ENCODE measurements at regions of chr9 and their contacts with region 1.

Region 1: DNA sequence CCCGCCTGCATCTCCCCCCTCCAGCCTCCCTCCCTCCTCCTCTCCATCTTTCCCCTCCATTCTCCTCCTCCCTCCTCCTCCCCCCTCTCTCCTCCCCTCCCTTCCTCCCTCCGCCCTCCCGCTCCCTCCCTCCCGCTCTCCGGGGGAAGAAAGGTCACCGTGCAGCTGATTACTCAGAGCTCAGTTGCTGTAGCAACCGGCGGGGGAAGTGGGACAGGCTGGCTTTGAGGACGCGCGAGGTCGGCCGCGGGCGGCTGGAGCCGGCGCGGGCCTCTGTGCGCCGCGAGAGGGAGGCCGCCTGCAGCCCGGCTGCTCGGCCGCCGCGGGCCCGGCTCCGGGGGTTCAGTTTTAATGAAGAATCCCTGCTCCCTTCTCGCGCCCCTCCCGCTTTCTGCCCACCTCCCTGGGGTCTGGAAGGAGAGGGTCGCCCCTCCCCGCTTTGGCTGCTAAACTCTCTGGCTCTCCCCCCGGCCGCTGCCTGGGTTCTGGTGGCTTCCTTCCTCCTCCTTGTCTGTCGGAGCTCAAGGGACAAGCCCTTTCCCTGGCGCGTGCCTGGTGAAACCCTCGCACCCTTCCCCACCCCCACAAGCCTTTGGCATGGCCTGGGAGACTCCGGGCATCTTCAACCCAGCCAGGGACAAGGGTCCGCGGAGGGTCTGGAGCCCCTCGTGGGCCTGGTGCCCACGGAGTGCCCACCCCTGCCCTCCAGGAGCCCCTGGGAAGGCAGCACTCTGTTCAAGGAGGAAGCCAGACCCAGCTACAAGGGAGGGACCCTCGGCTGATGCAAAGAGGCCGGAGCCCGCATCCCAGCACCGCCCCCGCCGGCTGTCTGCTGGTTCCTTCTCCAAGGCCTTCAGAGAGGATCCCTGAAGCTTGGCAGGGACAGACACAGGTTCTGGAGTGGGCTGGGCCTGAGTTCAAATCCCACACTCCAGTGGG is 160.3 kb downstream of the C9orf50 start:
- DNase-seq: peak; percentile 71 to 96 (median 86)
- ATAC-seq: peak; percentile 74
- H3K4me3 ChIP-seq: peak overlapping the region; percentile 55
- H3K4me3 Mint-ChIP-seq: peak overlapping the region; percentile 73
- H3K27ac ChIP-seq: peak overlapping the region; percentile 59 to 87
- H3K27ac Mint-ChIP-seq: peak overlapping the region; percentile 89
- H3K4me1 ChIP-seq: peaks cover 60% of the 10 kb centered on the region
- H3K4me1 Mint-ChIP-seq: peaks cover 35% of the 10 kb centered on the region
- H3K27me3 ChIP-seq: no peaks in the 10 kb centered on the region
- H3K27me3 Mint-ChIP-seq: no peaks in the 10 kb centered on the region
- CTCF ChIP-seq: no peak

Region 2: DNA sequence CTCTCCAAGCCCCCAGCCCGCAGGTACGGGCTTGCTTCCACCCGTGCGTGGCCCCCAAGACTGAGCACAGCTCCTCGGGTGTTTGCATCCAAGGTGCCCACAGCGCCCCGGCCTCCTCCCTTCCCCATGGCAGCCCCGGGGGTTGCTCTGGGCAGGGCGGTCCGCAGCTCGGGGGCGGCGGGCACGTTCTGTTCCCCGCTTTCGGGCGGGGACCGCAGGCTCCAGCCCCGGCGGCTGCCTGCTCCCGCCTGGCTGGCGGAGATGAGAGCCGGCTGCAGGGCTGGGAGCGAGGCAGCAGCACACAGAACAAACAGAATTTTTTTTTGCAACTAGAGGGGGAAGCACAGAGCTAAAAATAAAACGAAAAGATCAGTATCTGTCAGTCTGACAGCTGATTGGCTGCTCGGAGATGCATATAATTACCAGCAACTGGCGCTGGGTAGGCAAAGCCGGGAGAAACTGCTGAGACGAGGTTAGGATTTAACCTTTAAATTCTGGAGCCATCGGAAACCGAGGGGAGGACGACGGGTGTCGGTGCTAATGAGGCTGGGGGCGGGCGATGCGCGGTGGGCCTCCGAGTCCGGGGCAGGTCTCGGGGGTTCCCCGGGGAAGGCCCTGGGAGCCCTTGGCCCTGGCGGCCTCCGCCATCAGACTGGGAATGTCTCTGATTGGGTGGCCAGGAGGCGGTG is 139.9 kb before region 1 on chr9:
- CTCF ChIA-PET with region 1: interaction called, 12 read pairs
- POLR2A ChIA-PET with region 1: no interaction called
- intact Hi-C with region 1: no loop called
- DNase-seq: peak; percentile 16 to 85 (median 42)
- ATAC-seq: peak; percentile 97
- H3K4me3 ChIP-seq: peak overlapping the region; percentile 46
- H3K4me3 Mint-ChIP-seq: peak overlapping the region; percentile 74
- H3K27ac ChIP-seq: peak overlapping the region in 1 of 2 donors; percentile 50
- H3K27ac Mint-ChIP-seq: peak overlapping the region; percentile 67
- H3K4me1 ChIP-seq: peaks cover 24% of the 10 kb centered on the region
- H3K4me1 Mint-ChIP-seq: peaks cover 17% of the 10 kb centered on the region
- H3K27me3 ChIP-seq: no peaks in the 10 kb centered on the region
- H3K27me3 Mint-ChIP-seq: no peaks in the 10 kb centered on the region
- CTCF ChIP-seq: peak; percentile 25

Region 3: GRCh38 chr9:129436751-129437625 is 23.6 kb before region 1 on chr9:
- CTCF ChIA-PET with region 1: no interaction called
- POLR2A ChIA-PET with region 1: interaction called, 13 read pairs
- intact Hi-C with region 1: no loop called
- DNase-seq: peak in 11 of 14 experiments; percentile 31 to 75 (median 45)
- ATAC-seq: peak; percentile 75
- H3K4me3 ChIP-seq: peak overlapping the region; percentile 59
- H3K4me3 Mint-ChIP-seq: peak overlapping the region; percentile 92
- H3K27ac ChIP-seq: no peak overlapping the region
- H3K27ac Mint-ChIP-seq: peak overlapping the region; percentile 13
- H3K4me1 ChIP-seq: peaks cover 23% of the 10 kb centered on the region
- H3K4me1 Mint-ChIP-seq: peaks cover 26% of the 10 kb centered on the region
- H3K27me3 ChIP-seq: peaks cover 20 to 21% of the 10 kb centered on the region in 2 experiments
- H3K27me3 Mint-ChIP-seq: peaks cover 59% of the 10 kb centered on the region
- CTCF ChIP-seq: no peak

Region 4: GRCh38 chr9:129487642-129488409 is 27.2 kb after region 1 on chr9:
- CTCF ChIA-PET with region 1: interaction called, 6 read pairs
- POLR2A ChIA-PET with region 1: interaction called, 21 read pairs
- intact Hi-C with region 1: loop called in 1 of 2 experiments (anchors 2 kb)
- DNase-seq: peak in 13 of 14 experiments; percentile 34 to 79 (median 47)
- ATAC-seq: peak; percentile 13
- H3K4me3 ChIP-seq: peak overlapping the region; percentile 56
- H3K4me3 Mint-ChIP-seq: peak overlapping the region; percentile 83
- H3K27ac ChIP-seq: peak overlapping the region; percentile 77 to 87
- H3K27ac Mint-ChIP-seq: peak overlapping the region; percentile 94
- H3K4me1 ChIP-seq: peaks cover 83% of the 10 kb centered on the region
- H3K4me1 Mint-ChIP-seq: peaks cover 63% of the 10 kb centered on the region
- H3K27me3 ChIP-seq: no peaks in the 10 kb centered on the region
- H3K27me3 Mint-ChIP-seq: peaks cover 5% of the 10 kb centered on the region
- CTCF ChIP-seq: no peak

Region 5: DNA sequence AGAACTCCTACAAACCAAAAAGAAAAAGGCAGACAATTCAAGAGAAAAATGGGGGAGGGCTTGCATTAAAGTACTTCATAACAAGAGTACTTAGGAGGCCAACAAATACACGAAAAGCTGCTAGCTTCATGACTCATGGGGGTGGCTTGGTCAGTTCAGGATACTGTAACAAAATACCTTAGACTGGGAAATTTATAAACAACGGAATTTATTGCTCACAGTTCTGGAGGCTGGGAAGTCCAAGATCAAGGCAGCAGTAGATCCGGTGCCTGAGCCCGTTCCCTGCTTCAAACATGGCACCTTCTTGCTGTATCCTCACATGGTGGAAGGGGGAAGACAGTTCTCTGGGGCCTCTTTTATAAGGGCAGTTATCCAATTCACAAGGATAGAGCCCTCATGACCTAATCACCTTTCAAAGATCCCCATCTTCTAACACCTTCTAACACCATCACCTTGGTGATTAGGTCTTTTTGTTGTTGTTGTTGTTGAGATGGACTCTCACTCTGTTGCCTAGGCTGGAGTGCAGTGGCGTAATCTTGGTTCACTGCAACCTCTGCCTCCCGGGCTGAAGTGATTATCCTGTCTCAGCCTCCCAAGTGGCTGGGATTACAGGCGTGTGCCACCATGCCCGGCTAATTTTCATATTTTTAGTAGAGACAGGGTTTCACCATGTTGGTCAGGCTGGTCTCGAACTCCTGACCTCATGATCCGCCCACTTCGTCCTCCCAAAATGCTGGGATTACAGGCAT is 49.1 kb after region 1 on chr9:
- CTCF ChIA-PET with region 1: no interaction called
- POLR2A ChIA-PET with region 1: no interaction called
- intact Hi-C with region 1: no loop called
- DNase-seq: no peak
- ATAC-seq: no peak
- H3K4me3 ChIP-seq: no peak overlapping the region
- H3K4me3 Mint-ChIP-seq: no peak overlapping the region
- H3K27ac ChIP-seq: no peak overlapping the region
- H3K27ac Mint-ChIP-seq: no peak overlapping the region
- H3K4me1 ChIP-seq: no peaks in the 10 kb centered on the region
- H3K4me1 Mint-ChIP-seq: no peaks in the 10 kb centered on the region
- H3K27me3 ChIP-seq: no peaks in the 10 kb centered on the region
- H3K27me3 Mint-ChIP-seq: no peaks in the 10 kb centered on the region
- CTCF ChIP-seq: no peak

Region 6: DNA sequence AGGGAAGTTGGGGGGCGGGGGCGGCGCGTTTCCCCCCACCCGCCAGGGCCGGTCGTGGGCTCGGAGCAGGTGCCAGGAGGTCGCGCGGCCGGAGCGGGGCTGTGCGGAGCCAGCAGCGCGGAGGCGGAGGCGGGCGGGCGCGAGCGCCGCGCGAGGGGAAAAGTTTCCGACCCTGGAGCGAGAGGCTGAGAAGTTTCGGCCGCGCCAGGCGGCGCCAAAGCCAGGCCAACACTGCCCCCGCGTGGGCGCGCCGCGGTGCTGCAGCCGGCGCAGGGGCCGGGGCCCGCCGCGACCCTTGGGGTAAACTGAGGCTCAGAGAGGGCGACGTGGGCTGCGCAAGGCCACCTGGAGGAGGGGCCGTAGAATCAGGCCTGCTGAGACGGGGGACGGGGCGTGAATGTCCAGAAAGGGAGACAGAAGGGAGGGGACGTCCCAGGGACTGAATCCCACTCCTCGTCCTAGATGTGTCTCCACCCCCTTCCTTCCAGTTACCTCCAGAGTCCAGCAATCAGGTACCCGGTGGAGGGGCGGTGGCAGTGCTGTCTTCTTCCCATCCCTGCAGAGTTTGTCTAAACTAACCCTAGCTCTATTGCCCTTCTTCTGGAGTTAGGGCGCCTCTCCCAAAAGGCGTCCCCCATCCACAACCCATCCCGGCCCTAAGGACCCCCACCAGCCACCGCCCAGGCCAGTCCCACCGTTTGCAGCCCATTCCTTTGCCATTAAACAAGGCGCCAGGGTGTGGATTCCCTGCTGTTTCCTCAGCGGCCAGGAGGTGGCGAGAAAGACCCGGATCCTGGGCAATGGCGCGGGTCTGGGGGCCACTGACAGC is 150.1 kb after region 1 on chr9:
- CTCF ChIA-PET with region 1: interaction called, 4 read pairs
- POLR2A ChIA-PET with region 1: no interaction called
- intact Hi-C with region 1: loop called in 1 of 2 experiments (anchors 5 kb)
- DNase-seq: peak; percentile 61 to 86 (median 66)
- ATAC-seq: peak; percentile 60
- H3K4me3 ChIP-seq: peak overlapping the region; percentile 51
- H3K4me3 Mint-ChIP-seq: peak overlapping the region; percentile 87
- H3K27ac ChIP-seq: no peak overlapping the region
- H3K27ac Mint-ChIP-seq: peak overlapping the region; percentile 76
- H3K4me1 ChIP-seq: peaks cover 48% of the 10 kb centered on the region
- H3K4me1 Mint-ChIP-seq: peaks cover 43% of the 10 kb centered on the region
- H3K27me3 ChIP-seq: peaks cover 0 to 5% of the 10 kb centered on the region in 2 experiments
- H3K27me3 Mint-ChIP-seq: no peaks in the 10 kb centered on the region
- CTCF ChIP-seq: peak; percentile 88